Left ventricle myocardium superior (tissue), 1 donor: ENCODE measurements at regions of chr20 and their contacts with region 1.

Region 1: DNA sequence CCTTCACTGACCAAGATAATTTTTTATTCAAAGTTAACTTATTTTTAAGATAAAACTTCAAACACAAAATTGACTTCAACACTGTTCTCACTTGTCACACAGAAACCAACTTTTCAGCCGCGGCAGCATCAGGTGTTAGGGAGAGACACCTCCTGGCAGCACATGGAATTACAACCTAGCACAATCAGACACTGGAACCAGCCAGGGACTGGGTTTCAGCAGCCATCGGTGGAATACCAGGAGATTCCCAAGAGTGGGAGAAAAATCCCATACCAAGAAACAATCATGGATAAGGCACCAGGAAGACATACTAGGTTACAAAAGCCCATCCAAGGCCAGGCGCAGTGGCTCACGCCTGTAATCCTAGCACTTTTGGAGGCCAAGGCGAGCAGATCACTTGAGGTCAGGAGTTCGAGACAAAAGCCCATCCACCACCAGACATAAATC is 70.0 kb downstream of the SNX5 start:
- DNase-seq: peak; percentile 62
- ATAC-seq: peak; percentile 59

Region 2: DNA sequence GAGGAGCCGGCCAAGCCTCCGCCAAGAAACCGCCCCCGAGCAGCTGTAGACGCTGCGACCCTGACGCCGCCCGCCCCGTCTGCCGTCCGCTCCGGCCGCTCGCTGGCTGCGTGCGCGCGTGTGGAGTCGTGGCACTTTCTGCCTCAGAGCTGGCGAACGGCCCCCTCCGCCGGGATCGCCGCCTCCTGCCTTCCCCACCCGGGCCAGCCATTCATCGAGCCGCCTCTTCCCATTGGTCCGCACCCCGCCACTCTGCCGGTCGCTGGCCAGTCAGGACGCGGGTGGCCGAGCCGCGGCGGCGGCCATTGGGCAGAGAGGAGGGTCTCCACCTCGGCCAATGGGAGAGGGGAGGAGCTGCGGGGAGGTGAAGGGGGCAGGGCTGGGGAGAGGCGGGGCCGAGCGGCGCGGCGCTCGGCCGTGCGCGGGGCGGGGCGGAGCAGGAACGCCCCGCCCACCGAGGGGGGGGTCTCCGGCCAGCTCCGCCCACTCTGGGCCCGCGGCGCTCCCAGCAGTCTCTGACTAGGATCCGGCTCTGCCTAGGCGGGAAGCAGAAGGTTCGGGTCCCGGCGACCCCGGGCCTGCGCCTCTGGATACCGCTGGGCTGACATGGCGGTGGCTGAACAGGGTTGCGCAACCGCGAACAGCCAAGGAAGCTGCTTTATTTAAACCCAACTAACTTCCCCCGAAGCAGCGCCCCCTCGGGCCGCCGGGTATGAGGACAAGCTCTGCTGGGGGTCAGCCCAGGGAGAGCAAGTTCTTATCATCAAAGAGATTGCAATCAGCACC is 216.3 kb before region 1 on chr20 and contains the start of gene RRBP1:
- intact Hi-C with region 1: loop called (anchors 5 kb)
- DNase-seq: peak; percentile 99
- ATAC-seq: peak; percentile 97
- total RNA-seq, gene RRBP1: 35.6 TPM

Region 3: DNA sequence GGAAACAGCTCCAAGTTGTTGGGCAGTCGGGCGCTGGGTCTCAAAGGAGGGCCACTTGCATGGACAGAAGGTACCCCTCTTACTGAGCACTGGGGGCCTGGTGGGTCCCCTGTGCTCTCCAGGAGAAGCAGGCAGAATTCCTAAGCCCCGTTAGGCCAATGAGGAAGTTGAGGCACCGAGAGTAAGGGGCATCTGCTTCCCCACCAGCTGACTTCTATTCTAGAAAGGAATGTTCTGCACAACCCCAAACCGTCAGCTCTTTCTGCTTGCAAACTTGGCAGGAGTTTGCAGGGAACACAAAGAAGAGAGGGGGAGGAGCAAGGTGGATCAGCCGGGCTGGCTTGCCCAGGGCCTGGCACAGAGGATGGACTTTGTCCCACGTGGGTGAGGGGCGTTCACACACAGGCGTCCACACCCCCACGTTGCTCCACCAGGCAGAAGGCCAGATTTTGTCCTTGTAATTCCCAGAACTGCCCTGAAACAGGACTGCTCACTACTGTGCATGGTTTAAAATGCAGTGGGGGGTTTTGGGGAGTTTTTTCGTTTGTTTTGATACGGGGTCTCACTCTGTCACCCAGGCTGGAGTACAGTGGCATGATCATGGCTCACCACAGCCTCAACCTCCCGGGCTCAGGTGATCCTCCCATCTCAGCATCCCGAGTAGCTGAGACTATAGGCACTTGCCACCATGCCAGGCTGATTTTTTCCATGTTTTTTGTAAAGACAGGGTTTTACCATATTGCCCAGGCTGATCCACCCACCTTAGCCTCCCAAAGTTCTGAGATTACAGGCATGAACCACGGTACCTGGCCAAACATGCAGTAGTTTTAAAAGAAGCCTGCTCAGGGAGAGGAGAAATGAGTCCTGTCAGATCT is 23.2 kb before region 1 on chr20:
- intact Hi-C with region 1: no loop called
- DNase-seq: peak; percentile 66
- ATAC-seq: peak; percentile 62